ENCODE measurements at regions of chr1 and their contacts with region 1.

Region 1: DNA sequence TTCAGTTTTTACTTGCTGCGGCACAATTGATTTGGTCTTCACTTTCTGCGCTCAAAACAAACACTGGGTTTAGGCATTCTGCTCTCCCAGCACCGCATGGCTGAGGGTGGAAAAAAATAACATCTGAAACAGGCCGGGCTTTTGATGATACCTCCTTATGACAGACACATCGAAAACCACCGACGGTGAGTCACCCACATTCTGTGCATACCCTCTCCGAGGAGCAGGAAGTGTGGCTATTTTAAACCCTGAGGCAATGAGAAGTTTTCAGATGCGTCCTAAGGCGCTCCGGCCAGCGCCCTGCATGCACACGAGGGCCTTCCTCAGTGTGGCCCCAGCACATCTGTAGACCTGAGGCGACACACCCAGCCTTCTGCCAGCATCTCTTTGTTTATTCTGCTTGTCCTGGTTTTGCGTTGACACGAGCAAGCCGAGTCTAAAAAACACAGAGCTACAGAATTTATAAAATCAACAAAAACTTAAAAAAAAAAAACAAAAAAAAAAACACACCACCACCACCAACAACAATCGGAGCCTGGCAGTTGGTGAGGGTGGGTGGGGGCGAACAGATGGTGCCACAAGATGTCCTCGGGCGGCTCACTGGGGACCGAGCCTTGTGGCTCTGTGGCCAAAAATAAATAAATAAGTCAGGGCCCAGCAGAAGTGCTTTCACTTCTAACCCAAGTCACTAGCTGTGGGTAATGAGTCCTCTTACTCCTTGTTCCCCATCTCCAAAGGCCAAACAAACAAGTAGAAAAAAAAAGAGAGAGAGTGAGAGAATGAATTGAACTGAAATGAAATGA is 162.6 kb upstream of the IRF2BP2 start:
- DNase-seq: peak; percentile 52 to 64
- ATAC-seq: peak; percentile 60 to 91 (median 82)
- H3K4me3 ChIP-seq: peak overlapping the region in 1 of 10 donors; percentile 10
- H3K27ac ChIP-seq: peak overlapping the region in 7 of 10 donors; percentile 14 to 89 (median 51)
- H3K4me1 ChIP-seq: peaks cover 2 to 63% (median 14%) of the 10 kb centered on the region in 9 donors
- H3K27me3 ChIP-seq: peaks cover 0 to 13% (median 13%) of the 10 kb centered on the region in 7 donors
- CTCF ChIP-seq: no peak

Region 2: GRCh38 chr1:234638832-234639799 is 133.4 kb before region 1 on chr1:
- intact Hi-C with region 1: no loop called
- DNase-seq: no peak
- ATAC-seq: no peak
- H3K4me3 ChIP-seq: no peak overlapping the region
- H3K27ac ChIP-seq: no peak overlapping the region
- H3K4me1 ChIP-seq: no peaks in the 10 kb centered on the region
- H3K27me3 ChIP-seq: no peaks in the 10 kb centered on the region
- CTCF ChIP-seq: no peak

Region 3: GRCh38 chr1:234737967-234738314 is 34.6 kb before region 1 on chr1:
- intact Hi-C with region 1: loop called in 1 of 10 experiments (anchors 5 kb)
- DNase-seq: no peak
- ATAC-seq: no peak
- H3K4me3 ChIP-seq: no peak overlapping the region
- H3K27ac ChIP-seq: no peak overlapping the region
- H3K4me1 ChIP-seq: peaks cover 0 to under 1% (median 0%) of the 10 kb centered on the region in 9 donors
- H3K27me3 ChIP-seq: no peaks in the 10 kb centered on the region
- CTCF ChIP-seq: no peak

Measured in heart right ventricle (tissue), 16 donors.